ENCODE measurements at regions of chr6 and their contacts with region 1.

Region 1: GRCh38 chr6:44735630-44735963 is 348.1 kb downstream of the CDC5L start:
- DNase-seq: peak; percentile 68
- ATAC-seq: peak; percentile 71
- H3K4me3 ChIP-seq: no peak overlapping the region; the same call in 1 of the 2 replicates
- H3K27ac ChIP-seq: peak overlapping the region; percentile 64; the same call in 1 of the 2 replicates
- H3K4me1 ChIP-seq: peaks cover 42% of the 10 kb centered on the region
- H3K27me3 ChIP-seq: no peaks in the 10 kb centered on the region
- CTCF ChIP-seq: no peak
- EP300 ChIP-seq: peak in 1 of 2 experiments; percentile 32; a peak in 1 of 4 replicates
- POLR2A ChIP-seq: no peak
- RAD21 ChIP-seq: no peak

Region 2: DNA sequence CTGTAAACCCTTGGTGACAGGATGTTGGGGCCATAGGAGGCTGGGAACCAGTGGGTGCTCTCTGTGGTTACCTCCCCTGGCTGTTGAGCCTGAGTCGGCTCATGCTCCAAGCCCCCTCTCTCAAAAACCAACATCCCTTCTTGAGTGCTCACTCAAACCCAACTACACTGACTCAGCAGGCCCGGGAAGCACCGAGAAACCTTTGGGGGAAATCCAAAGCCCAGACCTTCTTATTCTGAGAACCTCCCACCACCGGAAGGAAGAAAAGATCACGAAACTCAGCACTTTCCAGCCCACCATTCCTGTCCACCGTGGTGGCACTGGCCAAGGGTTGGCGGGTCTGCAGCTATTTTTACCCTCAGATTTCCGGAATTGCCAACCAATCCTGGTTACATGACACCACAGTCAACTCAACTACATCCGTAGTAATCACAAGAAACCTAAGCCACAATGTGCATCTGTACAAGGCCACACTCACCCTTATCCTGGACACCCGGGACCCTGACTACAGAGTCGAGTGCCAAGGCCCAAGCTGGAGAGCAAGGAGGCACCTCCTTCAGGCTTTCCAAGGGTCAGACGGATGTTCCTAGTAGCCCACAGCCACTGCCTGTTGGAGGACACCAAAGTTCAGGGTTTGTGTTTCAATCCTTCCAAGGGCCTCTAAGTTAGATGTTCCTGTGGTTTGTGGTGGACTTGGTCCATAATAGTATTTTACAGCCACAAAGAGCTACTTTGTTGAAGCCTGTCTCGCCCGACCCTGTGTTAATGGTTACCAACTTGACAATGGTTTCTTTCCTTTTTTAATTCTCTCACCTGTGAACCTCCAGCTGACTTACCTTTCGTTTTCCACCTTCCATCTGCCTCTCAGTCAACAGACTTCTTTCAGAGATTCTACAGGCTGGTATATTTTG is 31.1 kb before region 1 on chr6:
- CTCF ChIA-PET with region 1: no interaction called
- POLR2A ChIA-PET with region 1: no interaction called
- RAD21 ChIA-PET with region 1: no interaction called
- SMC1A ChIA-PET with region 1: interaction called, 4 read pairs
- in situ Hi-C with region 1: no loop called
- intact Hi-C with region 1: loop called (anchors 1 kb)
- DNase-seq: peak; percentile 71
- ATAC-seq: peak; percentile 91
- H3K4me3 ChIP-seq: no peak overlapping the region
- H3K27ac ChIP-seq: peak overlapping the region; percentile 64
- H3K4me1 ChIP-seq: peaks cover 9% of the 10 kb centered on the region
- H3K27me3 ChIP-seq: no peaks in the 10 kb centered on the region
- CTCF ChIP-seq: no peak
- EP300 ChIP-seq: no peak
- POLR2A ChIP-seq: no peak
- RAD21 ChIP-seq: no peak

Region 3: DNA sequence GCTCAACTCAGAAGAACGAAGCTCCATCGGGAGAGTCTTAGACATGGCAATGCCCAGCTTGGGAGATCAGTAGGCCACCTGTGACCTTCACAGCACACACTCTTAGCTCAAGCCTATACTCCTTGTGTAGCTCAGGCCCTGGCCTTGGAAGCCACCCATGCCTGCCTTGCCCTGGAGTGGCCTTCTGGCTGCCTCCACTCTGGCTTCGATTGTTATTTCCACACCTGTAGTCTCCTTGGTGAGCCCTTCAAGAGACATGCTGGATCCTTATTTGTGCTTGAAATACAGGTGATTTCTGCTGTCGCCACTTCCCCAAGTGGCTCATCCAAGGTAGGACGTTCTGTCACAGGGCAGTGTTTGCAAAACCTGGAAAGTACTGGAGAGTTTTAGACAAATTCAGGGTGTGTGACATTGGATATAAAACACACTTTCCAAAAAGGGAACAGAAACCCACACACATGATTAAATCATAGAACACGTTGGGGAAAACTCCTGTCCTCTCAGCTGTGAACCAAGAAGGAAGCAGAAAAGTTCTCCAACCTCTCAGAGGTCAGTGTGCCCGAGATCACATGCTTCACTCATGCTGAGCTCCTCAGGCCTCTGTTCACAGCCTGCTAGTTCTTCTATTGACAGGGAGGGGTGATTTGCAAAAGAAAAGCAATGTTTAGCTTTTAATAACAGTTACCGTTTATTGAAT is 43.7 kb after region 1 on chr6:
- CTCF ChIA-PET with region 1: no interaction called
- POLR2A ChIA-PET with region 1: no interaction called
- RAD21 ChIA-PET with region 1: interaction called, 3 read pairs
- SMC1A ChIA-PET with region 1: interaction called, 3 read pairs
- in situ Hi-C with region 1: no loop called
- intact Hi-C with region 1: loop called (anchors 2 kb)
- DNase-seq: peak; percentile 62
- ATAC-seq: peak; percentile 96
- H3K4me3 ChIP-seq: no peak overlapping the region
- H3K27ac ChIP-seq: no peak overlapping the region; the same call in 1 of the 2 replicates
- H3K4me1 ChIP-seq: peaks cover 15% of the 10 kb centered on the region
- H3K27me3 ChIP-seq: no peaks in the 10 kb centered on the region
- CTCF ChIP-seq: no peak
- EP300 ChIP-seq: peak in 1 of 2 experiments; percentile 23; a peak in 1 of 4 replicates
- POLR2A ChIP-seq: no peak
- RAD21 ChIP-seq: no peak

Region 4: DNA sequence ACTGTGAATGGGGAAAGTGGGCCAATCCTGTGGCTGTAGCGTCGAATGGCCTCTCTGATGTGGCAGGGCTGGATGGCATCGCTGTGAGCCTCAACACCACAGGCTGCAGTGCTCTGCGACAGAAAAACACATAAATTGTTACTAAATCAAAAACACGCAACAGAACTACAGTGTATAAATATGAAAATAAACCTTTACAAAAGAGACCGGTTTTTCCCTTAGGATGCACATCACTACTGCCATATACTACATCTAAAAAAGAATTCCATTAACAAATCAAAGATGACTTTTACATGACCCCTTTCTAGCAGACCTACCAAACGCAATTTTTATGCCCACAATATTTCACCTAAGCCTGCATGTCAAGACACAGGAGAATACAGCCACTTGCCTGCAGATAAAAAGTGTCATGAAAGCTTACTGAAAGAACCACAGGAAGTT is 197.1 kb after region 1 on chr6:
- CTCF ChIA-PET with region 1: no interaction called
- POLR2A ChIA-PET with region 1: no interaction called
- RAD21 ChIA-PET with region 1: no interaction called
- SMC1A ChIA-PET with region 1: interaction called, 3 read pairs
- in situ Hi-C with region 1: no loop called
- intact Hi-C with region 1: loop called (anchors 5 kb)
- DNase-seq: no peak
- ATAC-seq: peak; percentile 54
- H3K4me3 ChIP-seq: no peak overlapping the region
- H3K27ac ChIP-seq: peak overlapping the region; percentile 31
- H3K4me1 ChIP-seq: no peaks in the 10 kb centered on the region
- H3K27me3 ChIP-seq: no peaks in the 10 kb centered on the region
- CTCF ChIP-seq: no peak
- EP300 ChIP-seq: no peak
- POLR2A ChIP-seq: no peak
- RAD21 ChIP-seq: no peak